ENCODE measurements at regions of chr10 and their contacts with region 1.

Region 1: GRCh38 chr10:73495884-73496674 is at the start of gene PPP3CB:
- DNase-seq: peak; percentile 100
- ATAC-seq: peak; percentile 79
- H3K4me3 ChIP-seq: peak within 1 kb of the TSS; percentile 83
- H3K27ac ChIP-seq: peak within 1 kb of the TSS; percentile 80
- H3K4me1 ChIP-seq: peaks cover 28% of the 10 kb centered on the region
- H3K27me3 ChIP-seq: no peaks in the 10 kb centered on the region
- CTCF ChIP-seq: no peak
- total RNA-seq, gene PPP3CB: 43.8 and 66.5 TPM in 2 replicates

Region 2: DNA sequence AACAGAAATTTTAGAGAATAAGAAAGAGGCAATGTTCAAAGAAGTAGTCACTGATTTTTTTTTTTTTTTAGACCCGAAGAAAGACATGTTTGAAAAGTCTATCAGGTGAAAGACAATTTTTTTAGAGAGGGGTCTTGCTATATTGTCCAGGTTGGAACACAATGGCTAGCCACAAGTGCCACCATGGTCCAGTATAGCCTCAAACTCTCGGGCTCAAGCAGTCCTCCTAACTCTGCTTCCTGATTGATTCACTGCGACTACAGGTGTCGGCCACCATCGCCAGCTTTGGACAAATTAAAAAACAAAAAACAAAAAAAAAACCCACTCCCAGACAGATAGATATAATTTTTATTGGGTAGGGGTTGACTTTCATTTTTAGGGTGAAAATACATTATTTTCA is 305.9 kb before region 1 on chr10:
- CTCF ChIA-PET with region 1: no interaction called
- POLR2A ChIA-PET with region 1: no interaction called
- intact Hi-C with region 1: no loop called
- DNase-seq: no peak
- ATAC-seq: no peak
- H3K4me3 ChIP-seq: no peak overlapping the region
- H3K27ac ChIP-seq: no peak overlapping the region
- H3K4me1 ChIP-seq: no peaks in the 10 kb centered on the region
- H3K27me3 ChIP-seq: no peaks in the 10 kb centered on the region
- CTCF ChIP-seq: no peak

Region 3: GRCh38 chr10:73263948-73264347 is 232.1 kb before region 1 on chr10:
- CTCF ChIA-PET with region 1: no interaction called
- POLR2A ChIA-PET with region 1: no interaction called
- intact Hi-C with region 1: loop called (anchors 5 kb)
- DNase-seq: peak; percentile 90
- ATAC-seq: peak; percentile 37
- H3K4me3 ChIP-seq: no peak overlapping the region
- H3K27ac ChIP-seq: no peak overlapping the region
- H3K4me1 ChIP-seq: peaks cover 20% of the 10 kb centered on the region
- H3K27me3 ChIP-seq: no peaks in the 10 kb centered on the region; the same call in 1 of the 2 replicates
- CTCF ChIP-seq: peak; percentile 99

Region 4: GRCh38 chr10:73529089-73529832 is 33.2 kb after region 1 on chr10:
- CTCF ChIA-PET with region 1: interaction called, 4 read pairs
- POLR2A ChIA-PET with region 1: interaction called, 12 read pairs
- intact Hi-C with region 1: no loop called
- DNase-seq: peak; percentile 99
- ATAC-seq: peak; percentile 97
- H3K4me3 ChIP-seq: no peak overlapping the region
- H3K27ac ChIP-seq: no peak overlapping the region
- H3K4me1 ChIP-seq: no peaks in the 10 kb centered on the region
- H3K27me3 ChIP-seq: no peaks in the 10 kb centered on the region
- CTCF ChIP-seq: peak; percentile 100

Region 5: DNA sequence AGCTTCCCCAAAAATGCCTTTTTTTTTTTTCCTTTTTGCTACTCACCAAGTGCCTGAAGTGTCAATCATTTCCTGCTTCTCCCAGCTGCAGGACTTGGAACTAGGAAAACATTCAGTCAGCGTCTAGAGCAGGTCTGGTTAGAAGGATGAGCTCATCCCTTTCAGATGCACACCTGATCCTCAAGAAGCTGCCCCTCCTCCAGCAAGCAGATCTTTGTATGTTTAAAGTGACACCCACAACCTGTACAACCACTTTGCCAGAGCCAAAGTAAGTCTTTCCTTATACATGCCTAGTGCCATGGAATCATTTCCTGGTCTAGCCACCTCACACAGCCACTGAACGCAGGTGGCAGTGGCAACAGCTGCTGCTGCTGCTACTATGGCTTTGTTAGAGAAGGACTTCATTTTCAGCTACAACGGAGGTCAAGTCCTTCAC is 105.4 kb after region 1 on chr10:
- CTCF ChIA-PET with region 1: no interaction called
- POLR2A ChIA-PET with region 1: interaction called, 24 read pairs
- intact Hi-C with region 1: no loop called
- DNase-seq: peak; percentile 100
- ATAC-seq: peak; percentile 97
- H3K4me3 ChIP-seq: peak overlapping the region; percentile 5; the same call in 1 of the 2 replicates
- H3K27ac ChIP-seq: peak overlapping the region; percentile 53
- H3K4me1 ChIP-seq: peaks cover 26% of the 10 kb centered on the region
- H3K27me3 ChIP-seq: no peaks in the 10 kb centered on the region
- CTCF ChIP-seq: no peak

Region 6: GRCh38 chr10:73946253-73947155 is 450.4 kb after region 1 on chr10:
- CTCF ChIA-PET with region 1: no interaction called
- POLR2A ChIA-PET with region 1: interaction called, 14 read pairs
- intact Hi-C with region 1: no loop called
- DNase-seq: peak; percentile 69
- ATAC-seq: peak; percentile 17
- H3K4me3 ChIP-seq: no peak overlapping the region
- H3K27ac ChIP-seq: no peak overlapping the region
- H3K4me1 ChIP-seq: peaks cover 8% of the 10 kb centered on the region
- H3K27me3 ChIP-seq: no peaks in the 10 kb centered on the region
- CTCF ChIP-seq: peak; percentile 83

Measured in PC-3 (cell line).